ENCODE measurements at regions of chr1 and their contacts with region 1.

Region 1: DNA sequence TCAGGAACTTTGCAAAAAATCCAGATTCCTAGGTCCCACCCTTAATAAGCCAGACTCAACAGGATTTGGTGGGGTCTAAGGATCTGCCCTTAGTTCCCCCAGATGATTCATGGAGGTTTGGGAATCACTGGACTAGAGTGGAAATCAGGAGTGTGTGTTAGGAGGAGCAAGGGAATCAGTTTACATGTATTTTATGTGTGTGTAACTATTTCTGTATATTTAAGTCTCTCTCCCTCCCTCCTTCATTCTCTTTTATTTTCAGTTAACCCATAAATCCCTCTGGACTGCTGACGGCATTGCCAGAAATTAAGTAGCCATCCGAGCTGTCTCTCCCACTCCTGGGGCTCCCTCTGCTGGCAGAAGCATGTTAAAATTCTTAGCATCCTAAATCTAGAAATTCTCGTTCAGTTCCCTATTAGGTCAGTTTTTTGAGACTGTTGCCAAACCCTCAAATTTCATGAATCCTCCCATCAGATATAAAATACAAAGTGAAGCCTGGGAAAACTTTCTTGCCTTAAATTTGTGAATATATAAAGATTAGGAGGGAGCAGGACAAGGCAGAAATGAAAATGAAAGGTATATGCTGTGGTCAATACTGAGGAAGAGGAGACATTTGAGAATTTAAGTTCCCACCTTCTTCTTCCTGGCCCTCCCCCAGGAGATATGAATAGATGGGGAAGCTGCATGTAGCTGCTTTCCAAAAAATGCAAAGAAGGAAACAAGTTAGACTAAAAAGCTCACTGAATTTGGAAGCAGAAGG is 11.7 kb upstream of the HSD11B1 start:
- DNase-seq: peak; percentile 98
- H3K4me3 Mint-ChIP-seq: no peak overlapping the region
- H3K27ac Mint-ChIP-seq: peak overlapping the region; percentile 55
- H3K4me1 Mint-ChIP-seq: peaks cover 64% of the 10 kb centered on the region
- H3K27me3 Mint-ChIP-seq: peaks cover 17% of the 10 kb centered on the region
- CTCF ChIP-seq: peak; percentile 100

Region 2: DNA sequence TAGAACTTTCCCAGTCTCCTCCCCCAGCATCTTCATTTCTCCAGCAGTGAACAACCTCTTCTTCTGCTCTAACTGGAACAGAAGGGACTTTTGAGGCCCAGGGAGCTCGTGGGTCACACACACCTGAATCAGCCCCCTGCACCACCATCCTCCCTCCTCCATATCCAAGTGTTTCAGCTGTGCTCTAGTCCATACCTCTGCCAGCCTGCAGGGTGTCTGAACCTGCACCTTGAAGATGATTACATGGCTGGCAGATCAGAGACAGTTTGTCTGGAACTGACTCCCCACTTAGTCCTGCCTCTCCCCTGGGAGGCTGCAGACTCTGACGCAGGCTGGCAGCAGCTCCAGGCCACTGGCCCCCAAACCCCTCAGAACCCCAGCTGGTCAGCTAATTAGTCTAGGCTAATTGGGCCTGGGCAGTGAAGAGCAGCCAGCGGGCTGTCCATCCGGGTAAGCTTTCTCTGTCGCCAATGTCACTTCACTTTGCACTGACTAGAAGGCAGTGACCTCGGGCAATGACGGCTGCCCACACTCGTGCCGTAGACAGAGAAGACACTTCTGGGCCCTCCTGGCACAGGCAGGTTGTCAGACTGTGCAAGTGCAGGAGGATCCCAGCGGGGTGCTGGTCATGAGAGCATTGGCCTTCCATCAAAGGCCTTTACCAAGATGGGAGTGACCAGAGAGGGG is 97.2 kb before region 1 on chr1:
- CTCF ChIA-PET with region 1: interaction called, 403 read pairs
- POLR2A ChIA-PET with region 1: interaction called, 3 read pairs
- intact Hi-C with region 1: no loop called
- DNase-seq: no peak
- H3K4me3 Mint-ChIP-seq: no peak overlapping the region
- H3K27ac Mint-ChIP-seq: no peak overlapping the region
- H3K4me1 Mint-ChIP-seq: peaks cover 6% of the 10 kb centered on the region
- H3K27me3 Mint-ChIP-seq: no peaks in the 10 kb centered on the region
- CTCF ChIP-seq: peak; percentile 6

Region 3: GRCh38 chr1:209607102-209607794 is 85.7 kb before region 1 on chr1:
- CTCF ChIA-PET with region 1: interaction called, 403 read pairs
- POLR2A ChIA-PET with region 1: interaction called, 69 read pairs
- intact Hi-C with region 1: loop called (anchors 1 kb)
- DNase-seq: peak; percentile 92
- H3K4me3 Mint-ChIP-seq: no peak overlapping the region
- H3K27ac Mint-ChIP-seq: peak overlapping the region; percentile 81
- H3K4me1 Mint-ChIP-seq: no peaks in the 10 kb centered on the region
- H3K27me3 Mint-ChIP-seq: no peaks in the 10 kb centered on the region
- CTCF ChIP-seq: no peak

Region 4: DNA sequence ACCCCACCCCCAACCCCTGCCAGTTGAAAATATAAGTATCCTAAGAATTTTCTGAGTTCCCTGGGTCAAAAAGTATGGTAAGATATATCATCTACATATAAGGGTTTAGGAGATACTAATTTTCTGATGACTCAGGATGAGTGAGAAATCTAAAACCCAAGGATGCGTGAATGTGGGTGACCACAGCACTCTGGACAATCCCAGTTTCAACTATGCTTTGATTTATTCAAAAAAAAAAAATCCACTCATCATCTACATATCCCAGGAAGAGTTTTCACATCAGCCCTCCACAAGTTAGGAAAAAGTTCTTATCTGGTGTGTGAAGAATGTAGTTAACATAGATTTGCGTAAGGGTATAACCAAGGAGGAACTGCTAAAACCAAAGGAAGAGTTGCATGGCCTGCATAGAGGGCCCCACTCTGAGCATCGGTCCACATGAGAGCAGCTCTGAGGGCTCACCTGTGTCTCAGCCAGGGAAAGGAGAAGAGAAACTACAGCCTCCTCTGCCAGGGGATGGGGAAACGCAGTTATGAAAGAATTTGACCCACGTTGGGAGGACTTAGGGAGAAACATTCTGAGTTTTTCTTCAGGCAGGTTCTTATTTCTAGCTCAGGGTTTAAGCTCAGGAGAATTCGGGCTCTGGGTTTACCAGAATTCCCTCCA is 59.5 kb before region 1 on chr1:
- CTCF ChIA-PET with region 1: interaction called, 564 read pairs
- POLR2A ChIA-PET with region 1: interaction called, 4 read pairs
- intact Hi-C with region 1: no loop called
- DNase-seq: no peak
- H3K4me3 Mint-ChIP-seq: no peak overlapping the region
- H3K27ac Mint-ChIP-seq: peak overlapping the region; percentile 83
- H3K4me1 Mint-ChIP-seq: peaks cover 47% of the 10 kb centered on the region
- H3K27me3 Mint-ChIP-seq: no peaks in the 10 kb centered on the region
- CTCF ChIP-seq: no peak

Region 5: GRCh38 chr1:209667708-209668107 is 25.2 kb before region 1 on chr1:
- CTCF ChIA-PET with region 1: interaction called, 38 read pairs
- POLR2A ChIA-PET with region 1: interaction called, 458 read pairs
- intact Hi-C with region 1: no loop called
- DNase-seq: no peak
- H3K4me3 Mint-ChIP-seq: no peak overlapping the region
- H3K27ac Mint-ChIP-seq: no peak overlapping the region
- H3K4me1 Mint-ChIP-seq: peaks cover 21% of the 10 kb centered on the region
- H3K27me3 Mint-ChIP-seq: no peaks in the 10 kb centered on the region
- CTCF ChIP-seq: no peak

Region 6: GRCh38 chr1:209704584-209704983 is 11.7 kb after region 1 on chr1 and contains the start of gene HSD11B1:
- CTCF ChIA-PET with region 1: interaction called, 22 read pairs
- POLR2A ChIA-PET with region 1: interaction called, 3 read pairs
- intact Hi-C with region 1: no loop called
- DNase-seq: peak; percentile 94
- H3K4me3 Mint-ChIP-seq: no peak within 1 kb of the TSS
- H3K27ac Mint-ChIP-seq: no peak within 1 kb of the TSS
- H3K4me1 Mint-ChIP-seq: peaks cover 7% of the 10 kb centered on the region
- H3K27me3 Mint-ChIP-seq: no peaks in the 10 kb centered on the region
- CTCF ChIP-seq: no peak
- total RNA-seq, gene HSD11B1: 0.21 and 0.39 TPM in 2 replicates

Region 7: DNA sequence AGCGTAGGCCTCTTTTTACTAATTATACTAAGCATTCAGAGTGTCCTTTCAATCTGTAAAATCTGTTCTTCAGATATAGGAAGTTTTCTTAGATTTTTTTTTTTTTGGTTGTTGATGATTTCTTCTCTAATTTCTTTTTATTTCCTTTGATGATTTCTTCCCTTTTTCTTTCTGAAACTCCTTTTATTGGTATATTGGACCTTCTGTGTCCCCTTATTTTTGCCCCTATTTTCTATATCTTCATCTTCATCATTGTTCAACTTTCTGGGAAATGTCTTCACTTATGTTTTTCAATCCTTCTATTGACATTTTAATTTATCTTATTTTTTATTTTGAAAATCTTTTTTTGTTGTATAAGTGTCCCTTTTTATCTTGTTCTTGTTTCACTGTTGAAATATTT is 227.9 kb after region 1 on chr1:
- CTCF ChIA-PET with region 1: no interaction called
- POLR2A ChIA-PET with region 1: no interaction called
- intact Hi-C with region 1: no loop called
- DNase-seq: no peak
- H3K4me3 Mint-ChIP-seq: no peak overlapping the region
- H3K27ac Mint-ChIP-seq: no peak overlapping the region
- H3K4me1 Mint-ChIP-seq: peaks cover 6% of the 10 kb centered on the region
- H3K27me3 Mint-ChIP-seq: no peaks in the 10 kb centered on the region
- CTCF ChIP-seq: no peak